WTC11 (cell line): ENCODE measurements at regions of chr15 and their contacts with region 1.

Region 1: GRCh38 chr15:60397772-60398445 is at the start of gene ANXA2:
- DNase-seq: peak; percentile 69
- ATAC-seq: peak; percentile 64
- H3K4me3 Mint-ChIP-seq: peak within 1 kb of the TSS; percentile 83
- H3K27ac Mint-ChIP-seq: peak within 1 kb of the TSS; percentile 54; the same call in 1 of the 2 replicates
- H3K4me1 Mint-ChIP-seq: peaks cover 61% of the 10 kb centered on the region
- H3K27me3 Mint-ChIP-seq: peaks cover 17% of the 10 kb centered on the region
- CTCF ChIP-seq: no peak
- total RNA-seq, gene ANXA2: 116 to 152 TPM (median 119 TPM) in 3 replicates

Region 2: DNA sequence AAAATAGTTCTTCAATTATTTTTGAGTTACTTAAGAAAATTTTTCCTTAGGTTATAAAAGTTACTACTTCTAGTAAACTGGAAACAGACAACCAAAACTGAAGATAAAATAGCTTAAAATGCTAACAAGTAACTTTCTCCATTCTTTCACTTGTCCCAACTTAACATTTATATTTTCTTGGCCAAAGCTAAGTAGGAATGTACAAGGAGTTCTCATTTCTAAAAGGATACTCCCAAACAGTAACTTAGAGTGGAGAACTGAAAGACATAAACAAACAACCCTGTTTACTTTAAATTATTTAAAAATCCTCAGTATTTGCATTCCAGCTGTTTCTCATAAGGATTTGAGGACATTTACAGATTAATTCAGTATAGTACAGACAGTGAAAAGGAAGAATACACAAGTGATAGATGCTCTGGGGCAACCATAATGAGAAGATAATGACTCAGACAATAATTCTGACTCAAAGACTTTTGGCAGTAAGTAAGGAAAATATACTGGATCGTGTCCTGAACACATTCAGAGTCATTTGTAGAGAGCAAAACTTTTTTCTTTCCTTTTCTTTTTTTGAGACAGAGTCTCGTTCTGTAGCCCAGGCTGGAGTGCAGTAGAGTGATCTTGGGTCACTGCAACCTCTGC is 29.1 kb after region 1 on chr15:
- CTCF ChIA-PET with region 1: no interaction called
- POLR2A ChIA-PET with region 1: no interaction called
- DNase-seq: no peak
- ATAC-seq: no peak
- H3K4me3 Mint-ChIP-seq: no peak overlapping the region
- H3K27ac Mint-ChIP-seq: no peak overlapping the region
- H3K4me1 Mint-ChIP-seq: peaks cover 6% of the 10 kb centered on the region
- H3K27me3 Mint-ChIP-seq: no peaks in the 10 kb centered on the region
- CTCF ChIP-seq: no peak

Region 3: GRCh38 chr15:60476713-60477112 is 78.8 kb after region 1 on chr15:
- CTCF ChIA-PET with region 1: interaction called, 3 read pairs
- POLR2A ChIA-PET with region 1: interaction called, 12 read pairs
- DNase-seq: no peak
- ATAC-seq: no peak
- H3K4me3 Mint-ChIP-seq: no peak overlapping the region
- H3K27ac Mint-ChIP-seq: no peak overlapping the region
- H3K4me1 Mint-ChIP-seq: peaks cover 23% of the 10 kb centered on the region
- H3K27me3 Mint-ChIP-seq: no peaks in the 10 kb centered on the region
- CTCF ChIP-seq: no peak

Region 4: DNA sequence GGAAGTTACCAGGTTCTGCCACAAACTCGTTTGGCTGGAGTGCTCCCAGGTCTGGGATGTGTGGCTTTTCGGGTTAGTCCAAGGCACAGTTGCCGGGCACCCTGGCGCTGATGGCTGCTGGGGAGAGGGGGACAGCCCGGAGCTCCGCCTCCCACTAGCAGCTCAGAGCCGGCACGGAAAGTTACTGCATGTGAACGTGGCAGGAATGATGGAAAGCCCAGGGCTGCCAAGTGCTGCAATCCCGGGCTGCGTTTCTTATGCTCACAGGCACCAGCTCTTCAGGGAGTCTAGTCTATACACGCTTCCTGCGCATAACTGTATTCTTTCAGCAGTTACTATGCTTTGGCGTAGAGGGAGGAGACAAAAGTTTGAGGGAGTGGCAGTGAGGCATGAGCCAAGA is 222.8 kb after region 1 on chr15:
- CTCF ChIA-PET with region 1: no interaction called
- POLR2A ChIA-PET with region 1: no interaction called
- DNase-seq: peak; percentile 64
- ATAC-seq: peak; percentile 90
- H3K4me3 Mint-ChIP-seq: no peak overlapping the region
- H3K27ac Mint-ChIP-seq: no peak overlapping the region
- H3K4me1 Mint-ChIP-seq: peaks cover 13% of the 10 kb centered on the region
- H3K27me3 Mint-ChIP-seq: no peaks in the 10 kb centered on the region
- CTCF ChIP-seq: no peak